ENCODE measurements at regions of chr1 and their contacts with region 1.

Region 1: GRCh38 chr1:36285448-36286101 is 20.6 kb upstream of the SH3D21 start:
- DNase-seq: peak in 1 of 2 donors; percentile 59
- ATAC-seq: peak; percentile 88
- H3K4me3 ChIP-seq: no peak overlapping the region
- H3K27ac ChIP-seq: no peak overlapping the region
- H3K4me1 ChIP-seq: no peaks in the 10 kb centered on the region
- H3K27me3 ChIP-seq: no peaks in the 10 kb centered on the region

Region 2: GRCh38 chr1:36187800-36188593 is 97.6 kb before region 1 on chr1:
- intact Hi-C with region 1: loop called in 1 of 2 experiments (anchors 5 kb)
- DNase-seq: peak; percentile 91 to 92
- ATAC-seq: peak; percentile 95
- H3K4me3 ChIP-seq: no peak overlapping the region
- H3K27ac ChIP-seq: peak overlapping the region in 1 of 2 donors; percentile 87
- H3K4me1 ChIP-seq: no peaks in the 10 kb centered on the region
- H3K27me3 ChIP-seq: no peaks in the 10 kb centered on the region

Region 3: GRCh38 chr1:36223993-36224536 is 61.5 kb before region 1 on chr1 and contains the start of gene THRAP3:
- intact Hi-C with region 1: loop called in 1 of 2 experiments (anchors 10 kb)
- DNase-seq: peak; percentile 100
- ATAC-seq: peak; percentile 99
- H3K4me3 ChIP-seq: peak within 1 kb of the TSS; percentile 63 to 69
- H3K27ac ChIP-seq: peak within 1 kb of the TSS; percentile 64 to 90
- H3K4me1 ChIP-seq: peaks cover 0 to 2% of the 10 kb centered on the region in 2 donors
- H3K27me3 ChIP-seq: no peaks in the 10 kb centered on the region
- total RNA-seq, gene THRAP3: 85.3 to 91.5 TPM

Region 4: GRCh38 chr1:36497207-36497606 is 211.6 kb after region 1 on chr1:
- intact Hi-C with region 1: no loop called
- DNase-seq: no peak
- ATAC-seq: no peak
- H3K4me3 ChIP-seq: no peak overlapping the region
- H3K27ac ChIP-seq: no peak overlapping the region
- H3K4me1 ChIP-seq: no peaks in the 10 kb centered on the region
- H3K27me3 ChIP-seq: no peaks in the 10 kb centered on the region